Panc1 (cell line): ENCODE measurements at regions of chr1 and their contacts with region 1.

Region 1: DNA sequence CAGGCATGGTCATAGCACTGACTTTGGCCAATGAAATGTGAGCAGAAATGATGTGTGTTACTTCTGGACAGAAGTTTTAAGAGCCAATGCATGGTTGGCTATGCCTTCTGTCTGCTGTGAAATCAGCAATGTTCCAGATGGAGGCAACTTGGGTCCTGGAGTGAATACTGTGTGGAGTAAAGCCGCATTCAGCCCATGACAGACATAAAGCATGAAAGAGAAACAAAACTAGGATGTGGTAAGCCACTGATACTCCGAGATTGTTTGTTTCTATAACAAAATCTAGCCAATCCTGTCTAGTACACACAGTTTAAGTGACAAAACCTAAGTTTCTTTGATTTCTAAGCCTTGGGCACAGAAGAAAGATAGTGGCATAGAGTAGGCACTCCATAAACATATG is 47.1 kb upstream of the ARHGAP29 start:
- DNase-seq: no peak
- ATAC-seq: no peak
- H3K4me3 ChIP-seq: no peak overlapping the region
- H3K27ac ChIP-seq: peak overlapping the region; percentile 66; the same call in 1 of the 2 replicates
- H3K4me1 ChIP-seq: peaks cover 8% of the 10 kb centered on the region
- H3K27me3 ChIP-seq: no peaks in the 10 kb centered on the region
- CTCF ChIP-seq: no peak

Region 2: DNA sequence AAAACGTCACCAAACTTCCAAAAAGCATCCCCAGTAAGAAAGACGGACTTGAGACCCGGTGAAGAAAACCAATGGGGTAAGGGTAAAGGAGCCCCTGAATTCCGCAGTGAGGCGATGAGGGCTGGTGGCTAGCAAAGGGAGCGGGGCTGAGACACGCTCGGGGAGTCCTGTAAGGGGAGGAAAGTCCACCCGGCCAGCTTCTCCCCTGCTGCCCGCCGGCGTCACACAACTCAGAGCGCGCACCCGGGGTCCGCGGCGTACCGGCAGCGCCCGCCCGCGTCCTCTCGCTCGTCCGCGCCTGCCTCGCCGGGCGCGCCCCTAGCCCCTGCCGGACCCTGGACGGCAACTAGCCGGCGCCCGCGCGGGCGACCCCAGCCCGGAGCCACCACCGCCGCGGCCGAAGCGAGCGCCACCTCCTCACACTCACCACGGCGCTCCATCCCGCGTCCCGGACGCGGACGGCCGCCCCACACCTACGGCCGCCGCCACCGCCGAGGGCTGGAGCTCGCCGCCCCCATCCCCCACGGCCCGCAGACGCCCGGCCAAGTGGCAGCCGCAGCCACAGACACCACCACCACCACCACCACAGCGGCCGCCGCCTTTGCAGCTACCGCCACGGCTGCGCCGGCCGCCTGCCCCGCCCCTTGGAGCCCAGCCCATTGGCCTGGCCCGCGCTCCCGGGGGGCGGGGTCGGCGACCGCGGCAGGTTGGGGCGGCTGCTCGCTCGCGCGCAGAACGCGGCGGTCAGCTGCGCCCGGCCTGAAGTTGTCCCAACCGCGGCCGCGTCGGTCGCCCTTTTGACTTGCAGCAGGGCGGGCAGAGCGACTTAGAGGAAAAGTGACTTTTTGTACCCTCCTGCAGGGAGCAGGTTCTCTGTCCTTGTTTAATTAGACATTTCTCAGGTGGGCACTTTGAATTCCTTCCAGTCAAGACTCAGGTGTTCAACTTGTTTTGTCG is 37.1 kb before region 1 on chr1:
- CTCF ChIA-PET with region 1: no interaction called
- POLR2A ChIA-PET with region 1: interaction called, 14 read pairs
- in situ Hi-C with region 1: no loop called
- intact Hi-C with region 1: no loop called
- DNase-seq: no peak
- ATAC-seq: peak; percentile 87
- H3K4me3 ChIP-seq: peak overlapping the region; percentile 66 to 77
- H3K27ac ChIP-seq: peak overlapping the region; percentile 99
- H3K4me1 ChIP-seq: peaks cover 27% of the 10 kb centered on the region
- H3K27me3 ChIP-seq: no peaks in the 10 kb centered on the region
- CTCF ChIP-seq: no peak